Panc1 (cell line): ENCODE measurements at regions of chr4 and their contacts with region 1.

Region 1: DNA sequence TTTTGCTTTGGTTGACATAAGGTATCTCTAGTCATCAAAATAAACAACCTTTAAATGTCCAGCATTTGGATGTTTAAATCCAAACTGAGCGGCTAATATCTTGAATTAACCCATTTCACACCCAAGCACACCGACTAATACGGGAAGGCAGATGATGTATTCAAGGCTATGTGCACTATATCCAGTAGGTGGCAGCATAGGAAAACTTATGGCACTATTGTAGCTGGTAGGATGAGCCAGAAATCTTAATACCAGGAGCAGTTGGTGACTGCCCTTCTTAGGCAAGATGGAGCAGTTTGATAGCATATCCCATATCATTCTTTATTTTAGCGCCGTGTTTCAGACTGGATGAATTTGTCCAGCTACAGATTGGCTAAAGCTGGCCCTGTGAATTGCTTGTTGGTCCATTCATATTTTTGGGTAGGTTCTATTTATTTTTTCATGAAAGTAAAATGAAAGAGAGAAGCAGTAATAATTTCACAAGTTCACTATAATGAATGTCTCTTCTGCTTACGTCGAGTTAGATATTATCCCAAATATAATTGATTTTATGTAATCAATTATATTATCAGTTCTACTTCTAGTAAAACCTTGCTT is 24.4 kb downstream of the UCHL1 start:
- DNase-seq: peak; percentile 75
- ATAC-seq: peak; percentile 99
- H3K4me3 ChIP-seq: no peak overlapping the region; a peak in 1 of 4 replicates
- H3K27ac ChIP-seq: no peak overlapping the region
- H3K4me1 ChIP-seq: no peaks in the 10 kb centered on the region
- H3K27me3 ChIP-seq: no peaks in the 10 kb centered on the region
- CTCF ChIP-seq: peak; percentile 75

Region 2: DNA sequence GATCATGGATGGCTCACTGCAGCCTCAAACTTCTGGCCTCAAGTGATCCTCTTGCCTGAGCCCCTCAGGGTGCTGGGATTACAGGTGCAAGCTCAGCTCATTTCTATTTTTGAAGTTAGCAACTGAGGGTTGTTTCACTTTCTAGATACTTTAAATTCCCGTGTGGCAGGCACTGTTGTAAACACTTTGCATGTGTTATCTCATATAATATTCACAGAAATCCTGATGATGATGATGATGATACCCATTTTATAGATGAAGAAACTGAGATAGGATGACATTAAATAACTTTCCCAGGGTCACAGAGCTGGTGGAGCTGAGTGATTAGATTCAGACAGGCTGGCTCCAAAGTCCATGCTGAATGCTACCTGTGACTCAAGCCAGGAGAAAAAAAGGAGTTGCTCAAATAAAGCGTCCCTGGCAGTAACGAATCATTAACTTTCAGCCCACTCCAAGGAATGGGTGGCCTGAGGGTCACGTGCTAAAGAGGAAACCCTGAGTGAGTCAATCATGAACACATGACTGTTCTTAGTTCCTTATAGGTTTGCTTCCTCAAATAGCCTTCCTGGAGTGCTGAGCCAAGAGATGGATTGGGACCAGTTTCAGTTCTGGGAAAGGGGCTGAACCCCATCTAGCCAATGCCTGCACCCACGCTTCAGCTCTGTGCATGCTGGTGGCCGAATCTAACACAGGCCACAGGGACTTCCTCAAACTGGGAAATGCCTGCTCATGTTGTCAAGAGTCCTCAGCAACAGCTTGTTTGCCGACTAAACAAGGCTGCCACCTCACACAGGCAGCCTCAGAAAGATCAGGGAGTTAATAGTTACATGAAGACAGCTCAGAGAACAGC is 704.3 kb before region 1 on chr4:
- CTCF ChIA-PET with region 1: no interaction called
- POLR2A ChIA-PET with region 1: no interaction called
- in situ Hi-C with region 1: no loop called
- intact Hi-C with region 1: no loop called
- DNase-seq: peak; percentile 73
- ATAC-seq: peak; percentile 85
- H3K4me3 ChIP-seq: peak overlapping the region in 1 of 2 experiments; percentile 34; a peak in 2 of 4 replicates
- H3K27ac ChIP-seq: peak overlapping the region; percentile 59; the same call in 1 of the 2 replicates
- H3K4me1 ChIP-seq: peaks cover 16% of the 10 kb centered on the region
- H3K27me3 ChIP-seq: no peaks in the 10 kb centered on the region
- CTCF ChIP-seq: no peak

Region 3: GRCh38 chr4:41661442-41662076 is 380.4 kb after region 1 on chr4:
- CTCF ChIA-PET with region 1: interaction called, 4 read pairs
- POLR2A ChIA-PET with region 1: no interaction called
- in situ Hi-C with region 1: no loop called
- intact Hi-C with region 1: loop called (anchors 1 kb)
- DNase-seq: peak; percentile 36
- ATAC-seq: no peak
- H3K4me3 ChIP-seq: no peak overlapping the region
- H3K27ac ChIP-seq: no peak overlapping the region
- H3K4me1 ChIP-seq: no peaks in the 10 kb centered on the region
- H3K27me3 ChIP-seq: 0 out of 2 replicates have a peak, but pooled peaks cover 2% of the 10 kb centered on the region
- CTCF ChIP-seq: peak; percentile 84

Region 4: GRCh38 chr4:41882625-41883347 is 601.6 kb after region 1 on chr4:
- CTCF ChIA-PET with region 1: no interaction called
- POLR2A ChIA-PET with region 1: no interaction called
- in situ Hi-C with region 1: no loop called
- intact Hi-C with region 1: loop called (anchors 5 kb)
- DNase-seq: no peak
- ATAC-seq: peak; percentile 92
- H3K4me3 ChIP-seq: peak overlapping the region in 1 of 2 experiments; percentile 20; a peak in 3 of 4 replicates
- H3K27ac ChIP-seq: no peak overlapping the region
- H3K4me1 ChIP-seq: no peaks in the 10 kb centered on the region
- H3K27me3 ChIP-seq: peaks cover 4% of the 10 kb centered on the region
- CTCF ChIP-seq: peak; percentile 96